Cardiac septum (tissue), 1 donor: ENCODE measurements at regions of chr12 and their contacts with region 1.

Region 1: GRCh38 chr12:117836999-117837736 is 131.6 kb downstream of the KSR2 start:
- DNase-seq: peak; percentile 82

Region 2: GRCh38 chr12:117212563-117213190 is 624.5 kb before region 1 on chr12:
- intact Hi-C with region 1: loop called (anchors 2 kb)
- DNase-seq: no peak

Region 3: GRCh38 chr12:117367011-117367638 is 470.0 kb before region 1 on chr12:
- intact Hi-C with region 1: loop called (anchors 1 kb)
- DNase-seq: peak; percentile 80

Region 4: GRCh38 chr12:117587631-117588287 is 249.4 kb before region 1 on chr12:
- intact Hi-C with region 1: loop called (anchors 10 kb)
- DNase-seq: no peak